ENCODE measurements at regions of chr3 and their contacts with region 1.

Region 1: GRCh38 chr3:16600780-16601539 is 4.3 kb downstream of the DAZL start:
- DNase-seq: peak; percentile 44
- H3K4me3 Mint-ChIP-seq: no peak overlapping the region
- H3K27ac Mint-ChIP-seq: no peak overlapping the region
- H3K4me1 Mint-ChIP-seq: peaks cover 29% of the 10 kb centered on the region
- H3K27me3 Mint-ChIP-seq: peaks cover 24% of the 10 kb centered on the region

Region 2: DNA sequence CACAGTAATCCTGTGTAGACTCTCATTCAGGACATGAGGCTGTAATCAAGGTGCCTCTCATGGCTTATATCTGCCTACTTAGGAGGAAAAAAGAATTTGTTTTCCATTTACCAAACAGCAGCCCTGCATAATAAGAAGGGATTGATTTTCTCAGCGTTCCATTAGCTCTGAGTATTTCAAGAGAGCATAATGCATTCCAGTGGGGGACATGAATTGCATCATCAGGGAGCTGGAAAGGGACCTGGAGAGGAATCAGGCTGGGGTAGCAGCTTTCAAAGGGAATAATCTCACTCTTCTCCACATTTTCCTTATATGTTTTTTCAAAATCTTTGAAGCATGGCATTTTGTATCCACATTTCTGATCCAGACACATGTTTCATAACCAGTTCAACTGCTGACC is 652.6 kb before region 1 on chr3:
- intact Hi-C with region 1: no loop called
- DNase-seq: no peak
- H3K4me3 Mint-ChIP-seq: no peak overlapping the region
- H3K27ac Mint-ChIP-seq: no peak overlapping the region
- H3K4me1 Mint-ChIP-seq: no peaks in the 10 kb centered on the region
- H3K27me3 Mint-ChIP-seq: peaks cover 4% of the 10 kb centered on the region

Region 3: DNA sequence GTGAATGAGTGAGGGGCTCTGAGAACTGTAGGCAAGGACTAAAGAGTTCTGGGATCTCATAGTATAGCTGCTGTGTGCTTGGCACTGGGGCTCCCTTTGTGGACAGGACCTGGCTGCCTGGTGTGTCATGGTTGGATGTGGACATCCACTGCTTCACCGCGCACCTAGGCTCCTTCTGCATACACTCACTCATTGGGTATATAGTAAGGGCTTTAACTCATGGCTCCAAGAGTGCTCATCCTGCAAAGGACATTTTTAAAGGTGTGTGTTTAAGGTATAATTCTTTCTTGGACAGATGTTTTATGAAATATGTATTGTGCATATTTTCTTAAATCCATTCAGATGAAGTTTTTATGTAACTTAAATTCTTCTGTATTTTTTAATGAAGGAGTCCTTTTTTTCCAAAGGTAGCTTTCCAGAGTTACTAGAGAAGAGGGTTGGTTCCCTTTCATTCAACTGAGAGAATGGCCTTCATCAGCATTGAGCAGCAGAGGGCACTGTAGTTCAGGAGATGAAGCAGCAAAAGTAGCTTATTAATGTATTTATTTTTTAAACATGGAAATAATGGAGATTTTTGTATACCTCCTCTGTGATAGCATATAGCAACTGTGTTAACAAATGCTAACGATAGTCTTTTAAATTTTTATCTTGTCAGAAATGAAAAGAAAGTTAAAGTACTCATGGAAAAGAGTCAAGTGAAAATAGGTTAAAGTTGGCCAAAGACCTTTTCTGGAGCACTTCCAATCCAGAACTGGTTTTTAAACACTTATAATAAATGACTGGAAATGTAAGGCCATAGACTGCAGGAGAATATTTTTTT is 310.7 kb before region 1 on chr3:
- intact Hi-C with region 1: loop called (anchors 1 kb)
- DNase-seq: no peak
- H3K4me3 Mint-ChIP-seq: peak overlapping the region; percentile 91
- H3K27ac Mint-ChIP-seq: peak overlapping the region; percentile 80
- H3K4me1 Mint-ChIP-seq: peaks cover 80% of the 10 kb centered on the region
- H3K27me3 Mint-ChIP-seq: no peaks in the 10 kb centered on the region

Region 4: GRCh38 chr3:16550676-16551341 is 50.2 kb before region 1 on chr3:
- intact Hi-C with region 1: loop called (anchors 2 kb)
- DNase-seq: peak; percentile 67
- H3K4me3 Mint-ChIP-seq: no peak overlapping the region
- H3K27ac Mint-ChIP-seq: peak overlapping the region; percentile 71
- H3K4me1 Mint-ChIP-seq: peaks cover 27% of the 10 kb centered on the region
- H3K27me3 Mint-ChIP-seq: peaks cover 6% of the 10 kb centered on the region

Region 5: DNA sequence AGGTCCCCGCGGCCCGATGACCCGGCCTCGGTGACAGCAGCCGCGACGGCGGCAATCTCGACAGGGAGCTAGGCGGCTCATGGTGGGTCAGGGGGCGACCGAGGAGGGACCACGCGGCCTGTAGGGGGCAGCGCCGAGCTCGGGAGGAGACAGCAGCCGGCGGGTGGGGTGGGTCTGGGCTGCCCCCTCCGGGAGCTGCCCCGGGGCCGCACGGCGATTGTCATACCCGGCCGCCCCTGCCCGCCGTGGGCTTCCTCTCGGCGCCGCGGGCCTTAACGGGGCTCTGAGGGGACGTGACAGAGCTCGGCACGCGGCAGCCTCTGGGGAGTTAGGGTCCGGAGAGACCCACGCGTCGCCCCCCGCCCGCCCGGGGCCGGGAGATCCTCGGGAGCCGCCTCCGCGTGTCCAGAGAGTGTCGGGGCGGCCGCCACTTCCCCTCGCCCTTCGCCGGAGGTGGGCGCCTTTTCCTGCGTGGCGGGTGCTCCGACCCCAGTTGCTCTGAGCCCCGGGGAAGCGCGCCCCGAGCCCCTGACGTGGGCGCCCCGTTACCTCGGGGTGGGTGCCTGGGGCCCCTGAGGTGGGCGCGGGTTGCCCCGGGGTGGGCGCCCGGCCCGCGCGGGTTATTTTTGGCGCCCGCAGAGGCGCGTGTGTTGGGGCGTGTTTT is 283.3 kb after region 1 on chr3:
- intact Hi-C with region 1: loop called (anchors 1 kb)
- DNase-seq: peak; percentile 45
- H3K4me3 Mint-ChIP-seq: peak overlapping the region; percentile 94
- H3K27ac Mint-ChIP-seq: peak overlapping the region; percentile 96
- H3K4me1 Mint-ChIP-seq: peaks cover 38% of the 10 kb centered on the region
- H3K27me3 Mint-ChIP-seq: peaks cover 4% of the 10 kb centered on the region

Region 6: GRCh38 chr3:17151598-17152373 is 550.8 kb after region 1 on chr3:
- intact Hi-C with region 1: loop called (anchors 1 kb)
- DNase-seq: peak; percentile 89
- H3K4me3 Mint-ChIP-seq: peak overlapping the region; percentile 60
- H3K27ac Mint-ChIP-seq: peak overlapping the region; percentile 85
- H3K4me1 Mint-ChIP-seq: peaks cover 45% of the 10 kb centered on the region
- H3K27me3 Mint-ChIP-seq: peaks cover 4% of the 10 kb centered on the region

Region 7: GRCh38 chr3:17412950-17413530 is 812.1 kb after region 1 on chr3:
- intact Hi-C with region 1: loop called (anchors 1 kb)
- DNase-seq: peak; percentile 16
- H3K4me3 Mint-ChIP-seq: no peak overlapping the region
- H3K27ac Mint-ChIP-seq: no peak overlapping the region
- H3K4me1 Mint-ChIP-seq: no peaks in the 10 kb centered on the region
- H3K27me3 Mint-ChIP-seq: no peaks in the 10 kb centered on the region